ENCODE measurements at regions of chr16 and their contacts with region 1.

Region 1: DNA sequence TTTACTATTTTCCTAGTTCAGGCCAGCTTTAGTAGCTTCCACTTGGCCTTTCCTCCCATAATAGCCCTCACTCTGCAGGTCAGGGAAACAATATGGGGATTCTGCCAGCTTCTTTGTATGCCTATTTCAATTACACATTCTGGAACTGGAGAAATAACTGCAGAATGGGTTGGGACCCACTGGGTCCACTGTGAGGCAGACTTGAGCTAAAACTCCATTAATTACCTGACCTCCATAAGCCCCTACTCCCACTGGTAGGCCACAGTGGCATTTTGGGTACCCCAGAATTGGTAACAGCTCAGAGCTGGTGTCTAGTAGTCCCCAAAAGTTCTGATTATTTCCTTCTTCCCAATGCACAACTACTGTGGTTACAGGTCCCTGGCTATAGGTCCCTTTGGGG is 16.7 kb upstream of the TENT4B start:
- DNase-seq: no peak
- CTCF ChIP-seq: peak; percentile 31

Region 2: DNA sequence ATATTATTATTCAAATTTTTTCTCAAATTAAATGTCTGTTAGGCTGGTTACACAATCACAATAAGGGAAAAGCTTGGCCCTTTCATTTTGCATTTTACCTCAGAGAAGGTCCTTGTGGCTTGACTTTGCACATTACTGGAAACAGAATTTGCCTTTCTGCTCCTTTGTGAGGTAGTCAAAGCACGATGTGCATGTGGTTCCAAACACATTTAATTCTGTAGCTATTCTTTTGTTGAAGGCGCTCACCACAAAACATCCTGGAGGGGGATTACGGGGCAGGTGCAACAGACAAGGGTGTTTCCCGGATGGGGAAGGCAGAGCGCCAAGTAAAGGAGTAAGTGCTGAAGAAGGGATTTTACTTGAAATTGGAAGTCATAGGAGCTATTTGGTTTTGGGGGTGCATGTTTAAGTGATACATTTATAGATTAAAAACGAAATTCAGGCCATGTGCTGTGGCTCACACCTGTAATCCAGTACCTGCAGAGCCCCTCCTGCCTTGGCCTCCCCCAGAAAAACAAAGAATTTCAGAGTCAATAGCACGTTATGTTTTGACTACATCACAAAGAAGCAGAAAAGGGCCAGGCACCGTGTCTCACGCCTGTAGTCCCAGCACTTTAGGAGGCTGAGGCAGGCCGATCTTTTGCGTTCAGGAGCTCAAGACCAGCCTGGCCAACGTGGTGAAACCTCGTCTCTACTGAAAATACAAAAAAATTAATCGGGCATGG is 14.5 kb before region 1 on chr16:
- CTCF ChIA-PET with region 1: interaction called, 14 read pairs
- POLR2A ChIA-PET with region 1: no interaction called
- DNase-seq: peak; percentile 41
- CTCF ChIP-seq: no peak

Region 3: DNA sequence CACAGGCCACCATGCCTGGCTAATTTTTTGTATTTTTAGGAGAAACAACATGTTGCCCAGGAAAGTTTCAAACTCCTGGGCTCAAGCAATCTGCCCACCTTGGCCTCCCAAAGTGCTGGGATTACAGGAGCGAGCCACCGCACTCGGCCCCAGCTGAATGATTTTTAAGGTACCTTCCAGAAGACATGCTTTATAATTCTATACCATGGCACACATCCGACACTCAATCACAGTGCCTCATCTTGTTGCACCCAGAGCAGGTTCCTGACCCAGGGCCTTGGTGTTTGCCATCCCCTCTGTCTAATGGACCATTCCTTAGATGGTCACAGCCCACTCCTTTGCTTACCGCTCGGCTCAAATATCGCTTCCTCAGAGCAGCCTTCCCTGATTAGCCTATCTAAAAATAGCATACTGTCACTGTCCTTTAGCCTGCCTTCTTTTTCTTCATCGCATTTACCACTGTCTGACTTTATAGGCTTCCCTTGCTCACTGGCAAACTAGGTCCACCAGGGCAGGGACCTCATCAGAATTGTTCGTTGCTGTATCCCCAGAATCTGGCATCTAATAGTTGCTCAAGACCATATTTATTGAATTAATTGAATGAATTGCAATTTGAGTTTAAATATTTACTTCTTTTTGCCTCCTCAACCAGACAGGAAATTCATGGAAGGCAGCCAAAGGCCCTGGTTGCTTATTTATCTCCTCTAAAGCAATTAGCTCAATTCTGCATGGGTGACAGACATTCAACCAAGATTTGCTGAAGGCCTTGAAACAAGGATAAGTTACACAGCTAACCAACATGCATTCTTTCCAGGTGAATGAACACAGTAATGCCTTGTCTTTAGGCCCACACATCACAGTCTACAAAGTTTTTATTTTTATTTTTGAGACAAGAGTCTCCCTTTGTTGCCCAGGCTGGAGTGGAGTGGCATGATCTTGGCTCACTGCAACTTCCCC is 10.4 kb after region 1 on chr16:
- CTCF ChIA-PET with region 1: interaction called, 16 read pairs
- POLR2A ChIA-PET with region 1: no interaction called
- DNase-seq: no peak
- CTCF ChIP-seq: no peak